ENCODE measurements at regions of chr1 and their contacts with region 1.

Region 1: GRCh38 chr1:239212811-239213220 is 173.6 kb upstream of the CHRM3 start:
- DNase-seq: peak in 1 of 2 experiments; percentile 19
- H3K4me3 ChIP-seq: no peak overlapping the region
- H3K4me3 Mint-ChIP-seq: peak overlapping the region; percentile 60
- H3K27ac Mint-ChIP-seq: no peak overlapping the region
- H3K4me1 ChIP-seq: no peaks in the 10 kb centered on the region
- H3K4me1 Mint-ChIP-seq: peaks cover 16% of the 10 kb centered on the region
- H3K27me3 ChIP-seq: no peaks in the 10 kb centered on the region
- H3K27me3 Mint-ChIP-seq: no peaks in the 10 kb centered on the region
- CTCF ChIP-seq: no peak

Region 2: DNA sequence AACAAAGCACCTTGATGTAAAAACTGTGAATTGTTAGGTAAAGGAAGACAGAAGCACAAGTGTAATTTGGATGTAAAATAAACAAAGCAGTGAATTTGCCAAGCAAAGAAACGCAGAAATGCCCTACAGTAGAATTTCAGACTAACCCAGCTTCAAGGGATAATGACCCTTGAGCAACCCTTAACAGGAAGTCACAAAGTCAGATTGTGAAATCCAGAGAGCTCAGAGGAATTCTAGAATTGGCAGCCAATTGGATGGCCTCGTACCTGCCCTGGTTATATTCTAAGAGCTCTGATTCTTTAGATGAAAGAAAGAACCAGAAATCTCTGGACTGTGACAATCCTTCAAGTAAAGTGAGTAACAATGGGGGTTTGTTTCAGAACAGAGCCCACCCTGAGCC is 20.8 kb after region 1 on chr1:
- CTCF ChIA-PET with region 1: no interaction called
- POLR2A ChIA-PET with region 1: no interaction called
- intact Hi-C with region 1: loop called (anchors 2 kb)
- DNase-seq: peak in 1 of 2 experiments; percentile 17
- H3K4me3 ChIP-seq: no peak overlapping the region
- H3K4me3 Mint-ChIP-seq: no peak overlapping the region
- H3K27ac Mint-ChIP-seq: no peak overlapping the region
- H3K4me1 ChIP-seq: peaks cover 17% of the 10 kb centered on the region
- H3K4me1 Mint-ChIP-seq: peaks cover 18% of the 10 kb centered on the region
- H3K27me3 ChIP-seq: no peaks in the 10 kb centered on the region
- H3K27me3 Mint-ChIP-seq: no peaks in the 10 kb centered on the region
- CTCF ChIP-seq: no peak

Measured in Caco-2 (cell line).